GM10248 (cell line): ENCODE measurements at regions of chr7 and their contacts with region 1.

Region 1: GRCh38 chr7:92421676-92422435 is 25.4 kb upstream of the GATAD1 start:
- DNase-seq: no peak
- CTCF ChIP-seq: no peak

Region 2: GRCh38 chr7:92245487-92246362 is 176.1 kb before region 1 on chr7 and contains the starts of genes ANKIB1 and KRIT1:
- CTCF ChIA-PET with region 1: interaction called, 11 read pairs
- POLR2A ChIA-PET with region 1: no interaction called
- DNase-seq: peak; percentile 89
- CTCF ChIP-seq: peak; percentile 20

Region 3: GRCh38 chr7:92461027-92462003 is 39.5 kb after region 1 on chr7:
- CTCF ChIA-PET with region 1: interaction called, 12 read pairs
- POLR2A ChIA-PET with region 1: no interaction called
- DNase-seq: peak; percentile 44
- CTCF ChIP-seq: peak; percentile 60